Heart right ventricle (tissue), 16 donors: ENCODE measurements at regions of chr21 and their contacts with region 1.

Region 1: GRCh38 chr21:34603002-34603709 is 11.8 kb downstream of the RCAN1 start:
- DNase-seq: peak; percentile 81 to 86
- ATAC-seq: peak; percentile 89 to 97 (median 96)
- H3K4me3 ChIP-seq: no peak overlapping the region
- H3K27ac ChIP-seq: peak overlapping the region in 3 of 10 donors; percentile 36 to 52 (median 50)
- H3K4me1 ChIP-seq: peaks cover 0 to 15% (median 8%) of the 10 kb centered on the region in 9 donors
- H3K27me3 ChIP-seq: no peaks in the 10 kb centered on the region
- CTCF ChIP-seq: peak; percentile 52 to 89 (median 85)

Region 2: DNA sequence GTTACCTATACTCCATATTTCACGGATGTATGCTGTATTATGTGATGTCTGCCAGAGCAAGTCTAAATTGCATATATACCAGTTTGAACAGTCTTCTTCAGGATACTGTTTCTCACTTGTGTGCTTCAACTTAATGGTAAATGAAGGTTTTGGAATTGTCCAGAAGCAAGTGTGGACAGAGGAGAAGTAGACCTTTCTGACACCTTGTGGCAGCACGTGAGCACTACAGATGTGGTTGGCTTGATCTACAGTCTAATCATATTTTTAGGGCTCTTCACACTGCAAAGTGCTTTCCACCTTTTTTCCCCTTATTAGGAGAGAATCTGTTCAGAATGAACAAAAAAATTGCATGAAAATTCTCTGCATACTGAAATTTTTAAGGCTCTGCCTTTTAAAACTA is 1727.7 kb after region 1 on chr21:
- intact Hi-C with region 1: loop called in 1 of 10 experiments (anchors 10 kb)
- DNase-seq: peak; percentile 29 to 34
- ATAC-seq: peak; percentile 66 to 84 (median 82)
- H3K4me3 ChIP-seq: no peak overlapping the region
- H3K27ac ChIP-seq: peak overlapping the region in 1 of 10 donors; percentile 18
- H3K4me1 ChIP-seq: peaks cover 0 to 67% (median 48%) of the 10 kb centered on the region in 9 donors
- H3K27me3 ChIP-seq: no peaks in the 10 kb centered on the region
- CTCF ChIP-seq: peak; percentile 43 to 80 (median 69)